Stomach (tissue), 19 donors: ENCODE measurements at regions of chr16 and their contacts with region 1.

Region 1: GRCh38 chr16:10027553-10027952 is 154.7 kb downstream of the GRIN2A start:
- DNase-seq: no peak
- H3K4me3 ChIP-seq: no peak overlapping the region
- H3K27ac ChIP-seq: no peak overlapping the region
- H3K4me1 ChIP-seq: no peaks in the 10 kb centered on the region
- H3K27me3 ChIP-seq: no peaks in the 10 kb centered on the region
- CTCF ChIP-seq: no peak
- EP300 ChIP-seq: no peak
- POLR2A ChIP-seq: no peak

Region 2: DNA sequence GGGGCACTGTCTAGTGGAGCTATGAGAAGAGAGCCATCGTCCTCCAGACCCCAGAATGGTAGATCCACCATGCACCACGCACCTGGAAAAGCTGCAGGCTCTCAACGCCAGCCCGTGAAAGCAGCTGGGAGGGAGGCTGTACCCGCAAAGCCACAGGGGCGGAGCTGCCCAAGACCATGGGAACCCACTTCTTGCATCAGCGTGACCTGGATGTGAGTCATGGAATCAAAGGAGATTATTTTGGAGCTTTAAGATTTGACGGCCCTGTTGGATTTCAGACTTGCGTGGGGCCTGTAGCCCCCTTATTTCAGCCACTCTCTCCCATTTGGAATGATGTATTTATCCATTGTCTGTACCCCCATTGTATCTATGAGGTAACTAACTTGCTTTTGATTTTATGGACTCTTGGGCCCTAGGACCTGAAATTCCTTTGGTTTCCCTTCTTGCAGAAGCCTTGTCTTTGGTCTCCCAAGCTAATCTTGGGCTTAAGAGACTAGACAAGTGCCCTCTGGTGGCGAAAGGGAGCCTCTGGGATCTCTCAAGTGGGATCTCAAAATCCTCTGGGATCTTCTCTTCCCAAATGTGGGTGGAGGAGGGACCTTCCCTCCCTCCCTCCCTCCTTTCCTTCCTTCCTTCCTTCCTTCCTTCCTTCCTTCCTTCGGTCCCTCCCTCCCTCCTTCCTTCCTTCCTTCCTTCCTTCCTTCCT is 994.3 kb before region 1 on chr16:
- intact Hi-C with region 1: loop called (anchors 10 kb)
- DNase-seq: peak; percentile 57 to 64
- H3K4me3 ChIP-seq: no peak overlapping the region
- H3K27ac ChIP-seq: no peak overlapping the region
- H3K4me1 ChIP-seq: no peaks in the 10 kb centered on the region
- H3K27me3 ChIP-seq: no peaks in the 10 kb centered on the region
- CTCF ChIP-seq: peak in 4 of 7 experiments; percentile 11 to 51 (median 34)
- EP300 ChIP-seq: no peak
- POLR2A ChIP-seq: no peak

Region 3: DNA sequence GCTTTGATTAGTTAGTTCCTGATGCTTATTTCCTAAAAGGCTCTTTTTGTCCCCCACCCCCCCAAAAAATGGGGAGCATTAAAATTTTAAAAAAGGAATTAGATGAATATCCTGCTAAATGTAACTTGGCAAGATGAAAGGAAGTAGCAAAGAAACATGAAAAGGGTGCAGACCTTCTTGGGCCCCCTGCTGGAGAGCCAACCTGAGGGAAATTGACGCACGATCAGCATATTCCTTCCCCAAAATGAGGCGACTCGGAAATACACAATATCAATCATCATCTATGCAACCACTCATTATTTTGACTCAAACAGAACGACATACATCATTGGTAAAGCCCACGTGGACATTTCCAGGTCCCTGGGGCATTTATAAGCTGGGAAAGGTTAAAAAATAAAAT is 95.0 kb after region 1 on chr16:
- intact Hi-C with region 1: no loop called
- DNase-seq: peak in 1 of 2 donors; percentile 41
- H3K4me3 ChIP-seq: no peak overlapping the region
- H3K27ac ChIP-seq: peak overlapping the region in 3 of 5 donors; percentile 38 to 70 (median 62)
- H3K4me1 ChIP-seq: peaks cover 6 to 28% (median 19%) of the 10 kb centered on the region in 4 donors
- H3K27me3 ChIP-seq: no peaks in the 10 kb centered on the region
- CTCF ChIP-seq: peak in 2 of 7 experiments; percentile 12 to 13
- EP300 ChIP-seq: no peak
- POLR2A ChIP-seq: no peak